A673 (cell line): ENCODE measurements at regions of chr6 and their contacts with region 1.

Region 1: GRCh38 chr6:111483736-111484632 is 966 bp upstream of the REV3L start:
- DNase-seq: peak; percentile 95
- H3K4me3 ChIP-seq: peak overlapping the region; percentile 82
- H3K27ac ChIP-seq: peak overlapping the region; percentile 97
- H3K4me1 ChIP-seq: peaks cover 38% of the 10 kb centered on the region
- H3K27me3 ChIP-seq: no peaks in the 10 kb centered on the region
- CTCF ChIP-seq: no peak

Region 2: GRCh38 chr6:111259089-111259831 is 224.7 kb before region 1 on chr6:
- CTCF ChIA-PET with region 1: interaction called, 12 read pairs
- POLR2A ChIA-PET with region 1: no interaction called
- intact Hi-C with region 1: loop called (anchors 5 kb)
- DNase-seq: peak; percentile 99
- H3K4me3 ChIP-seq: peak overlapping the region; percentile 84
- H3K27ac ChIP-seq: peak overlapping the region; percentile 75
- H3K4me1 ChIP-seq: no peaks in the 10 kb centered on the region
- H3K27me3 ChIP-seq: no peaks in the 10 kb centered on the region
- CTCF ChIP-seq: peak; percentile 97

Region 3: DNA sequence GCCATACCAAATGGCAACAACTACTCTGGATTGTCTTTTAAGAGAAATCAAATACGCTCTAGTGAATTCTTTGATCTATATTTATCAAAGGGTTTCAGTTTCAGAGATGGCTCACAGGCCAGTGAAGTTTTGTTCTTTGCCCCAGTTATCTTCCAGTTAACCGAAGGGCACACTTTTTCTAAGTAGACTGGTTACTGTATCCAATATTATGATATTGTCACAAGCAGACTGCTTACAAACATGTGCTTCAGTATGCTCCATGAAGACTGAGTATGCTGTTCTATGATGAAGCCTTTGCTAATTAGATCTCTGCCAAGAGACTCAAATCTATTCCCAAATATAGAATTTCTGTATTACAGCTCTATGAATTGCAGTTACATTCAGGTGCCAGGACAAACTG is 182.0 kb before region 1 on chr6:
- CTCF ChIA-PET with region 1: no interaction called
- POLR2A ChIA-PET with region 1: interaction called, 14 read pairs
- intact Hi-C with region 1: no loop called
- DNase-seq: no peak
- H3K4me3 ChIP-seq: no peak overlapping the region
- H3K27ac ChIP-seq: no peak overlapping the region
- H3K4me1 ChIP-seq: no peaks in the 10 kb centered on the region
- H3K27me3 ChIP-seq: no peaks in the 10 kb centered on the region
- CTCF ChIP-seq: no peak

Region 4: DNA sequence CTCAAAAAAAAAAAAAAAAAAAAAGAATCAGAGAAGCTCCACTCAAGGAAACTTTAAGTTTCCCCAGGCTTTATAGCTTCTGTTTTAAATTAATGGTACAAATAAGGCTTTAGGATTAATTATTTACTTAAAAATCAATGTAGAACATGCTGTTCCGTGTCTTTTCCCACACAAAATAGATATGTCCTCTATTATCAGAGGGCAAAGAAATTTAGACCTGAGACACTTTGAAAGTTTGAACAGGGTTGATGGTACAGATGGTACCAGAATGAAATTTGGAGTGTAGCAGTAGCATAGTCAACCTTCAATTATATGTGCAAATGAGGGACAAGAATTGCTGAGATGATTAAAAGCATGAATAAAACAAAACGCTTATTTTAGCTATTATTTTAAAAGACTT is 31.3 kb after region 1 on chr6:
- CTCF ChIA-PET with region 1: no interaction called
- POLR2A ChIA-PET with region 1: no interaction called
- intact Hi-C with region 1: no loop called
- DNase-seq: no peak
- H3K4me3 ChIP-seq: no peak overlapping the region
- H3K27ac ChIP-seq: no peak overlapping the region
- H3K4me1 ChIP-seq: peaks cover 11% of the 10 kb centered on the region
- H3K27me3 ChIP-seq: no peaks in the 10 kb centered on the region
- CTCF ChIP-seq: no peak

Region 5: GRCh38 chr6:111541026-111541681 is 57.2 kb after region 1 on chr6:
- CTCF ChIA-PET with region 1: no interaction called
- POLR2A ChIA-PET with region 1: interaction called, 30 read pairs
- intact Hi-C with region 1: loop called (anchors 1 kb)
- DNase-seq: peak; percentile 97
- H3K4me3 ChIP-seq: peak overlapping the region; percentile 19
- H3K27ac ChIP-seq: peak overlapping the region; percentile 88
- H3K4me1 ChIP-seq: peaks cover 58% of the 10 kb centered on the region
- H3K27me3 ChIP-seq: no peaks in the 10 kb centered on the region
- CTCF ChIP-seq: no peak

Region 6: DNA sequence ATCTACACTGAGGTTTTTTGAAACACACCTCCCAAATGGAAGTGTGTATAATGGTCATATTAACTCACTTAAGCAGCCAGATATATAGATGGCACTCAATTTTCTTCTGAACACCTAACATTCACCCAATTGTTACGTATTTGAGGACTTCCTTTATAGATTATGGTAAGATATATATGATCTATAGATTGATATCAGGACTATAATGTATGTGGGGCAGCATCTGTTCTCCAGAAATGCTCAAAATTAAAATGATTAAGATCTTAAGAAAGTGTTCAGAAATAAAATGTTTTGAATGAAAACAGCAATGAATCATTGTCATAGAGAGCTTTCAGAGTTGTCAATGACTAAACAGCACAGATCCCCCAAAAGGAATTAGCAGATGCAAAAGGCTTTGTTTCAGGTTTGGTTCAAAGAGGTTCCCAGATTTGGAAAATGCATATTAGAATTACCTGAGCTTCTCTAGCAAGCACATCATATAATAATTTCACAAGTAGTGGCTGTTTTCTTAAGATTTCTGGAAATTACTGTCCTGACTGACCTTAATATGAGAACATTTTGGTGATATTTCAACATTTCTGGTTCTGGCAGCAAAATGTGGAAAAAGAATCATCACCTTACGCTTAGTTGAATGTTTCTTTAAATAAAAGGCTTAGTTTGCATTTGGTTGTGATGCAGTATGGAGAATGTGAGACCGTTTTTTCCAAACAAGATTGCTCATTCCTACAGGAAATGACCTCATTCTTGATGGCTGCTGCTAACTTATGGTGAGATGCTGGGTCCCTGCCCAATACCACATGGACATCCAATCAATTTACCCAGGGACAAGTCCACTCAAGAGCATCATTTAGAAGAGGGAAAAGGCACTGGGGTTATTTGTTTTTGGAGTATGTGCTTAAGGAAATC is 90.2 kb after region 1 on chr6:
- CTCF ChIA-PET with region 1: no interaction called
- POLR2A ChIA-PET with region 1: interaction called, 4 read pairs
- intact Hi-C with region 1: loop called (anchors 5 kb)
- DNase-seq: peak; percentile 75
- H3K4me3 ChIP-seq: no peak overlapping the region
- H3K27ac ChIP-seq: peak overlapping the region; percentile 71
- H3K4me1 ChIP-seq: peaks cover 41% of the 10 kb centered on the region
- H3K27me3 ChIP-seq: no peaks in the 10 kb centered on the region
- CTCF ChIP-seq: no peak

Region 7: DNA sequence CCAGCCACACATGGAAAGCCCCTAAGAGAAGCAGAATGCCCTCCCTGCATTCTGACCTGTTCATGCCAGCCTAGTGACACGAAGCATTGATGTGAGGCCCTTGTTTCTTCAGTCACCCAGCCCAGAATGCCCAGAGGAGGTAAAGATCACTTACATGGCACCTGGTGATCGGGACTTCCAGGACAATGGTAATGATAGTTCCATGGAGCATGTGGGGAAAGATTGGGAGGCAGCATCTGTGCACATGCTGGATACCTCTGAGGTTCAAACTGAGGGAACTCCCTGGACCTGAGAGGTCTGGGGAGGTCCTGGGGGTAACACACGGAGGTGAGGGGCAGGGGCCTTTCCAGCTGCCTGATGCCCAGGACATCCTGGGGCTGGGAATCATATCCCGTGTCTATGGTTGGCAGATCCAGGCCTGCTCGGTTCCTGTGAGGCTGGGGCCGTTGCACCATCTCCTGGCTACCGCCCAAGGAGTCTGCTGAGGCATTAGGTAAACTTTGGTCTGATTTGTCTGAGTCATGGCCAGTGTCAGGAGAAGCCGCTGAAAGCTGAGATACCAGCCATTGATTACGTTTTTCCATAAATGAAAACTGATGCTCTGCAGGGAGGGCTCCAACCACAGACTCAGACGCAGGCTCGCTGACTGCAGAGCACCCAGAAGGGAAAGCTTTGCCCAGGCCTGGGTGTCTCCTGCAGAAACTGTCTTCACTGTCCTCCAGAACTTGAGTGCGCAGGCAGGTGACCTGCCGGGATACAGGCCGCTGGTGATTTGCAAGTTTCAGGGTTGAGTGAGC is 107.3 kb after region 1 on chr6:
- CTCF ChIA-PET with region 1: no interaction called
- POLR2A ChIA-PET with region 1: no interaction called
- intact Hi-C with region 1: no loop called
- DNase-seq: peak; percentile 76
- H3K4me3 ChIP-seq: no peak overlapping the region
- H3K27ac ChIP-seq: peak overlapping the region; percentile 57
- H3K4me1 ChIP-seq: peaks cover 20% of the 10 kb centered on the region
- H3K27me3 ChIP-seq: no peaks in the 10 kb centered on the region
- CTCF ChIP-seq: no peak

Region 8: GRCh38 chr6:111605100-111605751 is 121.2 kb after region 1 on chr6:
- CTCF ChIA-PET with region 1: no interaction called
- POLR2A ChIA-PET with region 1: interaction called, 3 read pairs
- intact Hi-C with region 1: loop called (anchors 10 kb)
- DNase-seq: peak; percentile 62
- H3K4me3 ChIP-seq: peak overlapping the region; percentile 51
- H3K27ac ChIP-seq: peak overlapping the region; percentile 67
- H3K4me1 ChIP-seq: peaks cover 40% of the 10 kb centered on the region
- H3K27me3 ChIP-seq: no peaks in the 10 kb centered on the region
- CTCF ChIP-seq: no peak

Region 9: DNA sequence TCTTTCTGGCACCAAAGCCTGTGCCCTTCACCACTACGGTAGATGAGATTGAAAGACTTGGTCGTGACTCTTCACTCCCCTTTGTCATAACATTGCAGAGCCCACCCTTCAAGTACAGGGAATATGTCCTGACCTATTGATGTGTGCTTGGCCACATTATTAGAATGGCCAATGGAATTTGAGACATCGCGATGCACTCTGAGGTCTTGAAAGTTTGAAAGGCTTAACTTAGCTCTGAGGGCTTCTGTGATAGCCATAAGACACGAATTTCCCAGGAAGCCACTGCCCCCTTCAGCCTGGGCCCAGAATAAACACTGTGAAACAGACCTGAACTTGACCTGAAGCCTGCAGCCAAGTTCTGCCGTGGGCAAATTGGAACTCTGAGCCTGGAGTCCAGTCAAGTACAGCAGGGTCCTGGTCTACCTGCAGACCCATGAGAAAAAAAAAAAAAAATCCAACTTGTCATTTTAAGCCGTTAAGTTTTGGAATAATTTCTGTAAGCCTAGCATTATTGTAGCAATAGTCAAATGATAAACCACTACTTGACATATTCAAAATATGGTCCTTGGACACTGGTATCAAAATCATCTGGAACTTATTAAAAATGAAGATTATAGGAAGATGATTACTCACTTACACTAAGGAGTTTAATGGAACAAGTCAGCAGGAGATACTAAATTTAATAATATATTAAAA is 158.6 kb after region 1 on chr6:
- CTCF ChIA-PET with region 1: interaction called, 5 read pairs
- POLR2A ChIA-PET with region 1: no interaction called
- intact Hi-C with region 1: loop called (anchors 10 kb)
- DNase-seq: peak; percentile 73
- H3K4me3 ChIP-seq: no peak overlapping the region
- H3K27ac ChIP-seq: no peak overlapping the region
- H3K4me1 ChIP-seq: no peaks in the 10 kb centered on the region
- H3K27me3 ChIP-seq: no peaks in the 10 kb centered on the region
- CTCF ChIP-seq: peak; percentile 81